BJ (cell line): ENCODE measurements at regions of chr17 and their contacts with region 1.

Region 1: GRCh38 chr17:39244600-39245570 is 19.1 kb upstream of the STAC2 start:
- DNase-seq: no peak
- H3K4me3 ChIP-seq: no peak overlapping the region
- H3K27me3 ChIP-seq: no peaks in the 10 kb centered on the region
- CTCF ChIP-seq: peak; percentile 97

Region 2: DNA sequence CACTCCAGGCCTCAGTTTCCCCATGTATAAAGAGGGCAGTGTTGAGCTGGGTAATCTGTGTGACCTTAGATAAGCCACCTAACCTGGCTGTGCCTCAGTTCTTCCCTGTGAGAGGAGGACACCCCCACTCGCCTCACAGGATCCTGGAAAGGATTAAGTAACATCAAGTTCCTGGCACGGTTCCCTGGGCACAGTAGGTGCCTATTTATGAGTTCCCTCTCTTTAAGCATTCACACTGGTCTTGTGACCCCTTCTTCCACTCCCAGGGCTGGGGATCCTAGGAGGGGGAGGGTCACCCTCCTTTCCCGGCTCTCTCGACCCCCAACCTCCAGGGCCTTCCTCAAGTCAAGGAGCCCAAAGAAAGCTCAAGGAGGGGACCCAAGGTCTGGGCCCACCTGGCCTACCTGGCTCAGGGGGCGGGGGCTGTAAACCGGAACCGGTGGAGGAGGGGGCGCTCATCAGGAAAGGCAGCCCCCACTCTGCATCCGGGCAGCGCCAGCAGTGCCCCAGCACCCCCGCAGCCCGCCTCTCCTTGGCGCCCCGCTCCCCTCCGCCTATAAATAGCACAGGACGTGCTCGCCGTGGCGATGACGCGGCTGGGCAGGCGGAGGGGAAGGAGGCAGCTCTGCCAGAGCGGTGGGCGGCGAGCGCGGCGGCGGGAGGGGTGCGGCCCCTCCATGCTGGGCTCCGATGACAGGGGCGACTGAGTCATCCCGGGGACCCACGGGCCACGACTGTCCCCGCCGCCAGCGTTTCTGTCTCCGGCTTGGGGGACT is 35.4 kb before region 1 on chr17:
- CTCF ChIA-PET with region 1: interaction called, 438 read pairs
- POLR2A ChIA-PET with region 1: no interaction called
- DNase-seq: no peak
- H3K4me3 ChIP-seq: peak overlapping the region; percentile 36
- H3K27me3 ChIP-seq: no peaks in the 10 kb centered on the region
- CTCF ChIP-seq: no peak

Region 3: DNA sequence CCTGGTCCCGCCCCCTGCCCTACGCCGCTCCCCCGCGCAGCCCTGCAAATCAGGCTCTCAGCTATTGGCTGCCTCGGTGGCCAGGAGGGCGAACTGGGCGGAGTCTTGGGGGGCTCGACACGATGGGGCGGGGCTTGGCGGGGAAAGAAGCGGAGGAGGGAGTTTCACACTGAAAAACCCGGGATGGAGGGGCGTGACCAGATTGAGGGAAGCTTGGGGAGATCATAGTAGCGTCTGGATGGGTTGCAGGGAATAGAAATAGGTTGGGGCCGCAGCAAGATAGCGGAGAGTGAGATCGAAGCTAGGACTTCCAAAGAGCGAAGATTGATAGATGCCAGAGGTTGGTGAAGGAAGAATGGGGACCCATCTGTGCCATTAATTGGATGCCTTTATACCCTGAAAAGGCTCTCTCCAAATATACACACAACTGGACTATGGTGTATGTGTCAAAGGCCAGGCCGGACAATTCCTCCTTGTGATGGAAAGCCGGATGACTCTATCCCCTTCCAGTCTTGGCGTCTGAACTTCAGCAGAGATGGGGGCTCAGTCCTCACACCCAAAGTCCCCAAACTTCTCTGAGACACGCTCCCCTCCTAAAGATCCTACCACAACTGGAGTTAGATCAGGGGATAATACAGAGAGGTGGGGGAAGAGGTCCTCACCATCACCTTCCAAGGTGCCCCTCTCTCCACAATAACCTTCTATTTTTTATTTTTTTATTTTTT is 18.8 kb before region 1 on chr17:
- CTCF ChIA-PET with region 1: interaction called, 438 read pairs
- POLR2A ChIA-PET with region 1: no interaction called
- DNase-seq: no peak
- H3K4me3 ChIP-seq: peak overlapping the region; percentile 28
- H3K27me3 ChIP-seq: peaks cover 35% of the 10 kb centered on the region
- CTCF ChIP-seq: no peak